Aorta (tissue), 5 donors: ENCODE measurements at regions of chr11 and their contacts with region 1.

Region 1: DNA sequence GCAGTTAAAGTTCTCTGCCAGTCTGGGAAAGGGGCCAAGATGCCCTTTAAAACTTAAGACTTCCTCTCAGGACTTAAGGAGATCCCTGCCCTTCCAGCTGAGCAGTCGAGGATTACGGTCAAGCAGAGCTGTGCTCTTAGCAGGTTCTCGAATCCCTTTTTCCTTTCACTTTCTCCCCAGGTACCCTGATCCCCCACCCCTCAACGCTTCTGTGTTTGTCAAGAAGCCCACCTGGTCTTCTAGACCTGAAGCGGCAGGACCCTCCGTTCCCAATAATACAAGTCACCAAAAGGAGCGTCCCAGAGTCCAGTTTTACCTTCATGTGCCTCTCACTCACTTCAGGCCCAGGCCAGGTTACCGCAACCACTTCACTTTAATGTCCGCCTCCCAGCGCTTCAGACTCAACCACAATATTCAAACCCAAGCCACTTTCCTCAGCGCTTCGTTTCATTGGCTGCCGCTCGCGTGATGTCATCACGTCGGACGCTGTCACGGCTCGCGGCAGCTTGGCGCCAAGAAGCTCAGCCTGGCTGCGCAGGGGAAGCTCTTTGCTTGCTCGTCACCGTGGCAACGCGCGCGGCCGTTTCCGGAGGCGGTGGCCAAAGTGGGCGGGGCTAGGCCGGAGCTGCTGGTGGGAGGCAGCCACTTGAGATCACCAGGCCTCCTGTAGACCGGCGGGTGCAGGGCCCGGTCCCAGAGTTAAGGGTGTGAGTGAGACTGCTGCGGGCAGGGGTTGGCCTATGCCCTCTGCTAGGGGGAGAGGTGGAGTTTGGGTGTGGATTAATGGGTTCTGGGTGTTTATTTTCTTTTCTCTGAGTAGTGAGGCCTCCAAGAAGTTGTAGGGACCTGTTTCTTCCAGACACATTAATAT is at the starts of genes KIF18A and METTL15:
- DNase-seq: peak; percentile 100
- ATAC-seq: peak; percentile 99
- H3K4me3 ChIP-seq: peak within 1 kb of the TSS; percentile 51 to 59
- H3K27ac ChIP-seq: peak within 1 kb of the TSS; percentile 60 to 63
- H3K4me1 ChIP-seq: peaks cover 0 to 2% of the 10 kb centered on the region in 2 donors
- H3K27me3 ChIP-seq: no peaks in the 10 kb centered on the region
- total RNA-seq, gene KIF18A: 0.60 to 1.0 TPM
- total RNA-seq, gene METTL15: 16.3 to 19.2 TPM

Region 2: GRCh38 chr11:27698872-27699474 is 409.0 kb before region 1 on chr11:
- intact Hi-C with region 1: loop called in 1 of 2 experiments (anchors 10 kb)
- DNase-seq: peak; percentile 75 to 92
- ATAC-seq: peak; percentile 92
- H3K4me3 ChIP-seq: peak overlapping the region; percentile 55 to 95
- H3K27ac ChIP-seq: no peak overlapping the region
- H3K4me1 ChIP-seq: peaks cover 0 to 5% of the 10 kb centered on the region in 2 donors
- H3K27me3 ChIP-seq: no peaks in the 10 kb centered on the region

Region 3: GRCh38 chr11:28566339-28567089 is 458.5 kb after region 1 on chr11:
- intact Hi-C with region 1: loop called in 1 of 2 experiments (anchors 5 kb)
- DNase-seq: peak; percentile 85 to 93
- ATAC-seq: peak; percentile 94
- H3K4me3 ChIP-seq: peak overlapping the region in 1 of 2 donors; percentile 32
- H3K27ac ChIP-seq: peak overlapping the region; percentile 0 to 58
- H3K4me1 ChIP-seq: no peaks in the 10 kb centered on the region
- H3K27me3 ChIP-seq: no peaks in the 10 kb centered on the region